ENCODE measurements at regions of chr7 and their contacts with region 1.

Region 1: DNA sequence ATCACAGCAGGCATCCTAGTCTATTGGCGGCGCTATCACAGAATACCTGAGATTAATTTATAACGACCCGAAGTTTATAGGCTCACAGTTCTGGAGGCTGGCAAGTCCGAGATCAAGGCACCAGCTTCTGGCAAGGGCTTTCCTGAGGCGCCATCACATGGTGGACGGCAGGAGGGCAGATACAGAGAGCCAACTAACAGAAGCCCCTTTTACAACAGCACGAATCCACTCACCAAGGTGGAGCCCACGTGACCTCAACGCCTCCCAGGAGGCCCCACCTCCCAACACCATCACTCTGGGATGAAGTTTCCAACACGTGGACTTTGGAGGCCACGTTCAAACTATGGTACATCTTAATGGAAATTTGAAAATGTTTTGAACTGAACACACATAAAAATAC is 255.3 kb downstream of the ELFN1 start:
- DNase-seq: no peak
- H3K4me3 Mint-ChIP-seq: peak overlapping the region; percentile 22
- H3K27ac Mint-ChIP-seq: no peak overlapping the region
- H3K4me1 Mint-ChIP-seq: peaks cover 67% of the 10 kb centered on the region
- H3K27me3 Mint-ChIP-seq: peaks cover 32% of the 10 kb centered on the region

Region 2: DNA sequence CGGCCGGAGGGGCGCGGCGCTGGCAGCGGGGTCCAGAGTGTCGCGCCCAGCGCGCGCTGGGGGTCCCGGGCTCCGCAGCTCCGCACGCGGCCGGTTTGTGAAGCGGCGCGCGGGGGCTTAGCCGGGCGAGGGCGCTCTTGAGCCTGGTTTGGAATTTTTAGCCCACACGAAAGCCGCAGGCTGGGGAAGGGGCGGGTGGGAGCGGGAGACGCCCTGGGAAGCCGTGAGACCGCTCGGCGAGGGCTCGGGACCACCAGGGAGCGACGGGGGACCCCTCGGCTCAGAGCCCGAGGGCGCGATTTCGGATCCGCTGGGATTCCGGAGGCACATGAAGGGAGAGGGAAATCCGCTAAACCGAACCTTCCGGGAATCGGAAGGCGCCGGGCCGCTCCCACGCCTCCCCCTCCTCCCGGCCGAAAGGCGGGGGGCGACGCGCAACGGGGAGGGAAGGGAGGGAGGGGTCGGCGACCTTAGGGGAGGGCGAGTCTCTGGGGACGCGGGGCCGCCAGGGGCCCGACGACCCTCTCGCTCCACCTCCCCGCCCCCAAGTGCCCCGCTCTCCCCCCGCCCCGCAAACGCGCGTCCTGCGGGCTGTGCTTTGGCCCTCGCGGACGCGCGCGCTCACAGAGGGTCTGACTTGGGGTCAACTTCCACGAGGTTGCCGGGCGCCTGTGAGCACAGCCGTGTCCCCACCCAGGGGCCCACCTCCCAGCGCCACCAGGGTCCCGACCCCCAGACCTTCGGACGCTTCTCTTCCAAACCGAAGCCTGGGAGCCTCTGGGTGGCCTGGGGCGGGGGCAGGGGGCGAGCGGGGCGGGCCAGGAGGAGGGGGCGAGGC is 260.4 kb before region 1 on chr7:
- intact Hi-C with region 1: loop called (anchors 5 kb)
- DNase-seq: peak; percentile 16
- H3K4me3 Mint-ChIP-seq: no peak overlapping the region
- H3K27ac Mint-ChIP-seq: no peak overlapping the region
- H3K4me1 Mint-ChIP-seq: no peaks in the 10 kb centered on the region
- H3K27me3 Mint-ChIP-seq: peaks cover 41% of the 10 kb centered on the region

Region 3: GRCh38 chr7:1940402-1940786 is 15.0 kb after region 1 on chr7:
- intact Hi-C with region 1: loop called (anchors 1 kb)
- DNase-seq: peak; percentile 90
- H3K4me3 Mint-ChIP-seq: peak overlapping the region; percentile 84
- H3K27ac Mint-ChIP-seq: peak overlapping the region; percentile 87
- H3K4me1 Mint-ChIP-seq: peaks cover 55% of the 10 kb centered on the region
- H3K27me3 Mint-ChIP-seq: peaks cover 2% of the 10 kb centered on the region

Region 4: GRCh38 chr7:1961701-1962276 is 36.4 kb after region 1 on chr7:
- intact Hi-C with region 1: loop called (anchors 1 kb)
- DNase-seq: peak; percentile 29
- H3K4me3 Mint-ChIP-seq: no peak overlapping the region
- H3K27ac Mint-ChIP-seq: peak overlapping the region; percentile 87
- H3K4me1 Mint-ChIP-seq: peaks cover 14% of the 10 kb centered on the region
- H3K27me3 Mint-ChIP-seq: peaks cover 5% of the 10 kb centered on the region

Region 5: DNA sequence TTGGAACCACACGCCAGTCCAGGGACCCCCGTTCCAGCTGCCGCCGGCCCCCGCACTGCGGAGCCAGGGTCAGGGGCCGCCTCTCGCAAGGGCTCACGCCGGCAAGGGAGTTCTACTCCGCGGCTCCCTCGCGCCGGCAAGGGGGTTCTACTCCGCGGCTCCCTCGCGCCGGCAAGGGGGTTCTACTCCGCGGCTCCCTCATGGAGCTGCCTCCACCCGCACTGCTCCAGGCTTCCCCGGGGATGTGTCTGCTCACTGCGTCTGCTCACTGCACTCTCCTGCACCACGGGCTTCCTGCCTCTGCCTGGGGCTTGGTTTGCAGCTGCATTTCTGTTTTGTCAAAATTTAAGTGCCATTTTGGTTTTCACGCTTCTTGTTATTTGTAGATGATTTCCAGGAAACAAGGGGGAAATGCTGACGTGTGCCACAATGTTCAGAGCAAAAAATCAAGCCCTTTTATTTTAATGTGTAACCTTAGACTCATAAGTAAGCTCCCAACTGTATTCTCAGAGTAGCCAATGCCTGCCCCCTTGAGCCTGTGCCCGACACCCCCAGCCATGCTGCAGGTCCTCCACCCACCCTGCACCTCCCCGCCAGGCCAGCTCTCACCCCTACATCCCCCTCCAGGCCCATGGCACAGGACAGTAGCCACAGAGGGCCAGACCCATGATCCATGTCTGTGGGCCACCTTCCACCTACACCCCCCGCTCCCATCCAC is 61.2 kb after region 1 on chr7:
- intact Hi-C with region 1: no loop called
- DNase-seq: peak; percentile 35
- H3K4me3 Mint-ChIP-seq: peak overlapping the region; percentile 29
- H3K27ac Mint-ChIP-seq: peak overlapping the region; percentile 59
- H3K4me1 Mint-ChIP-seq: peaks cover 22% of the 10 kb centered on the region
- H3K27me3 Mint-ChIP-seq: no peaks in the 10 kb centered on the region

Region 6: DNA sequence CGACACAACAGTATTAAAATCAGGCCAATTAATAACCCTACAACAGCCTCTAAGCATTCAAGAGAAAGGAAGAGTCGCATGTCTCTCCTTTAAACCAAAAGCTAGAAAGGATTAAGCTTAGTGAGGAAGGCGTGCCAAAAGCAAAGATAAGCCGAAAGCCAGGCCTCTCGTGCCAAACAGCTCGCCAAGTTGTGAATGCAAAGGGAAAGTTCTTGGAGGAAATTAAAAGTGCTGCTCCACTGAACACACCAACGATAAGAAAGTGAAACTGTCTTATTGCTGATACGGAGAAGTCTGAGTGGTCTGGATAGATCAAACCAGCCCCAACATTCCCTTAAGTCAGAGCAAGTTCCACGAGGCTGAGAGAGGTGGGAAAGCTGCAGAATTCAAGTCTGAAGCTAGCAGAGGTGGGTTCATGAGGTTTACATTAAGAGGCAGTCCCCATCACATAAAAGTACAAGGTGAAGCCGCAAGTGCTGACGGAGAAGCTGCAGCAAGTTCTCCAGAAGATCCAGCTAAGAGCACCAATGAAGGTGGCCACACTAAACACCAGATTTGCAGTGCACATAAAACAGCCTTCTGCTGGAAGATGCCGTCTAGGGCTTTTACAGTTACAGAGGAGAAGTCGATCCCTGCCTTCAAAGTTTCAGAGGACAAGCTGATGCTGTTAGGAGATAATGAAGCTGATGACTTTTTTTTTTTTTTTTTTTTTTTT is 112.6 kb after region 1 on chr7:
- intact Hi-C with region 1: loop called (anchors 1 kb)
- DNase-seq: no peak
- H3K4me3 Mint-ChIP-seq: peak overlapping the region; percentile 83
- H3K27ac Mint-ChIP-seq: peak overlapping the region; percentile 24
- H3K4me1 Mint-ChIP-seq: peaks cover 42% of the 10 kb centered on the region
- H3K27me3 Mint-ChIP-seq: no peaks in the 10 kb centered on the region

Region 7: DNA sequence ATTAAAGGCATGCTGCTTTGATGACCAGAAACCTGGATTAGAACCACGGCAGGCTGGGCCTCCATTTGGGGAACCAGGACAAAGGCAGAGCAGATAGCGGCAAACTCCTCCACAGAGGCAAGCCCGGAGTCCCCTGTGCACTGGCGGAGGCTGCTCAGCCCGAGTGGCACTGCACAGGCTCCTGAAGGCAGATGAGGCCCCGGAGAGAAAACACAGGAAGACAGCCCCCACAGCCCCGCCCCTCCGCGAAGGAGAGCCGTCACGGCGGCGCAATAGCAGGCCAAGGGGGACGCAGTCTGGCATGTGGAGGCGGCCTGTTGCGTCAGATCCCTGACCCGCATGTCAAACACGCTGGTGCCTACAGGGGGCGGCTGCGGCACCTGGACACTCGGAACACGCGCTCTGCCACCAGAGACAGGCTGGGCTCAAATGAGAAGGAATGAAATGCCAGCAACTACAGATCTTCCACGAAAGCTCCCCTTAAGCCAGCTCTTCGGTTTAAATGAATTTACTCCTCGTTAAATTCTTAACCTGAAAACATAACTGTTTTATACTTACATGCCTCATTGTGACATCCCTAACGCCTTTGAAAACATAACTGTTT is 178.9 kb after region 1 on chr7:
- intact Hi-C with region 1: loop called (anchors 5 kb)
- DNase-seq: peak; percentile 41
- H3K4me3 Mint-ChIP-seq: no peak overlapping the region
- H3K27ac Mint-ChIP-seq: peak overlapping the region; percentile 52
- H3K4me1 Mint-ChIP-seq: peaks cover 10% of the 10 kb centered on the region
- H3K27me3 Mint-ChIP-seq: peaks cover 1% of the 10 kb centered on the region

Region 8: DNA sequence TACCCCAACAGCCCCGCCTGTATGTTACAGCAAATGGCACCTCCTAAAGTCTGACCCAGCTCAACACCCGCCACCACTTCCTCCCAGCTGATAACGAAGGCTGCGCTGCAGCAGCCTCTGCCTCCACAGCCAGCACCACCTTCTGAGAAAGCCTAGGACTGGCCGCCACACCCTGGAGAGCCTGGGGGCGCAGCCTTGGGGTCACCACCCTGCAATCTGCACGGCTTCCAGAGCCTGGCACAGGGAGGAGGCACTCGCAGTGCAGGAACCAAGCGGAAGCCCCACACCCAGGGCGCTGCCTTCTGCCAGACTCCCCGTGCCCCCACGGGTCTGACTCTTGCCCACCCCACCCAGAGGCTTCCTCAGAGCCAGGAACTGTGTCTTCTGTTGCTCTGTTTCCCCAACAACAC is 194.9 kb after region 1 on chr7:
- intact Hi-C with region 1: loop called (anchors 2 kb)
- DNase-seq: peak; percentile 42
- H3K4me3 Mint-ChIP-seq: no peak overlapping the region
- H3K27ac Mint-ChIP-seq: no peak overlapping the region
- H3K4me1 Mint-ChIP-seq: peaks cover 12% of the 10 kb centered on the region
- H3K27me3 Mint-ChIP-seq: no peaks in the 10 kb centered on the region

Region 9: GRCh38 chr7:2157468-2158279 is 232.3 kb after region 1 on chr7:
- intact Hi-C with region 1: no loop called
- DNase-seq: no peak
- H3K4me3 Mint-ChIP-seq: no peak overlapping the region
- H3K27ac Mint-ChIP-seq: no peak overlapping the region
- H3K4me1 Mint-ChIP-seq: no peaks in the 10 kb centered on the region
- H3K27me3 Mint-ChIP-seq: no peaks in the 10 kb centered on the region